Activated naive CD4-positive, alpha-beta T cell treated with anti-CD3 and anti-CD28 coated beads, Interleukin-2, amount 10 ng/mL, durations not matched to agents 7 days and 5 days (primary cell): ENCODE measurements at regions of chr12 and their contacts with region 1.

Region 1: GRCh38 chr12:56987551-56988053 is 18.7 kb downstream of the ZBTB39 start:
- DNase-seq: peak; percentile 81
- H3K4me3 Mint-ChIP-seq: no peak overlapping the region
- H3K27ac Mint-ChIP-seq: no peak overlapping the region
- H3K4me1 Mint-ChIP-seq: peaks cover 15% of the 10 kb centered on the region
- H3K27me3 Mint-ChIP-seq: peaks cover 24% of the 10 kb centered on the region

Region 2: GRCh38 chr12:56759263-56759908 is 228.2 kb before region 1 on chr12:
- CTCF ChIA-PET with region 1: interaction called, 82 read pairs
- DNase-seq: no peak
- H3K4me3 Mint-ChIP-seq: no peak overlapping the region
- H3K27ac Mint-ChIP-seq: no peak overlapping the region
- H3K4me1 Mint-ChIP-seq: peaks cover 12% of the 10 kb centered on the region
- H3K27me3 Mint-ChIP-seq: peaks cover 4% of the 10 kb centered on the region

Region 3: DNA sequence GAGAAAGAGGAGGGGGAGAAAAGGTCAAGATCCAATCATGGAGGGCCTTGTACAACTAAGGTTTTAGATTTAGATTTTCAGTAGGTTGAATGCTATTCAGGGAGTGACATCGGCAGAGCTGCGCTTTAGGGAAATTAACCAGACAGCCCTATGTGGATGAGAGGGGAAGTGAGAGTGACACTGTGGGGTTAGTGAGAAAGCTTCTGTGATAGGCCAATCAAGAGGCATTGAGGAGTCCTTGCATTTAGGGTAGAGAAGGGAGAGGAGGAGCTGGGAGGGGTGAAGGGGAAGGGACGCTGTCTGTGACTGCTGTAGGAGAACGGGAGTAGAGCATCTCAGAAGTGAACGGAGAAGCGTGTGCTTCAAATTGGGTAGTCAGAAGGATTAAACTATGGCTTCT is 221.1 kb before region 1 on chr12:
- CTCF ChIA-PET with region 1: interaction called, 82 read pairs
- DNase-seq: no peak
- H3K4me3 Mint-ChIP-seq: no peak overlapping the region
- H3K27ac Mint-ChIP-seq: no peak overlapping the region
- H3K4me1 Mint-ChIP-seq: no peaks in the 10 kb centered on the region
- H3K27me3 Mint-ChIP-seq: no peaks in the 10 kb centered on the region

Region 4: GRCh38 chr12:56839915-56840325 is 147.7 kb before region 1 on chr12:
- CTCF ChIA-PET with region 1: interaction called, 20 read pairs
- DNase-seq: peak; percentile 54
- H3K4me3 Mint-ChIP-seq: no peak overlapping the region
- H3K27ac Mint-ChIP-seq: no peak overlapping the region
- H3K4me1 Mint-ChIP-seq: peaks cover 18% of the 10 kb centered on the region
- H3K27me3 Mint-ChIP-seq: peaks cover 15% of the 10 kb centered on the region

Region 5: GRCh38 chr12:56998981-56999380 is 11.4 kb after region 1 on chr12:
- CTCF ChIA-PET with region 1: interaction called, 28 read pairs
- DNase-seq: peak; percentile 61
- H3K4me3 Mint-ChIP-seq: no peak overlapping the region
- H3K27ac Mint-ChIP-seq: peak overlapping the region; percentile 82
- H3K4me1 Mint-ChIP-seq: peaks cover 39% of the 10 kb centered on the region
- H3K27me3 Mint-ChIP-seq: no peaks in the 10 kb centered on the region

Region 6: GRCh38 chr12:57195611-57196371 is 208.2 kb after region 1 on chr12:
- CTCF ChIA-PET with region 1: no interaction called
- DNase-seq: no peak
- H3K4me3 Mint-ChIP-seq: no peak overlapping the region
- H3K27ac Mint-ChIP-seq: no peak overlapping the region
- H3K4me1 Mint-ChIP-seq: no peaks in the 10 kb centered on the region
- H3K27me3 Mint-ChIP-seq: peaks cover 6% of the 10 kb centered on the region